ENCODE measurements at regions of chr15 and their contacts with region 1.

Region 1: GRCh38 chr15:74906446-74907162 is at the start of gene FAM219B:
- DNase-seq: peak; percentile 88
- ATAC-seq: peak; percentile 88
- H3K4me3 Mint-ChIP-seq: peak within 1 kb of the TSS; percentile 92
- H3K27ac Mint-ChIP-seq: peak within 1 kb of the TSS; percentile 94
- H3K4me1 Mint-ChIP-seq: peaks cover 37% of the 10 kb centered on the region
- H3K27me3 Mint-ChIP-seq: no peaks in the 10 kb centered on the region
- total RNA-seq, gene FAM219B: 39.3 to 49.7 TPM

Region 2: GRCh38 chr15:73972984-73973682 is 933.5 kb before region 1 on chr15:
- CTCF ChIA-PET with region 1: no interaction called
- POLR2A ChIA-PET with region 1: no interaction called
- intact Hi-C with region 1: no loop called
- DNase-seq: peak; percentile 91
- ATAC-seq: peak; percentile 88
- H3K4me3 Mint-ChIP-seq: peak overlapping the region; percentile 8
- H3K27ac Mint-ChIP-seq: no peak overlapping the region
- H3K4me1 Mint-ChIP-seq: peaks cover 27% of the 10 kb centered on the region
- H3K27me3 Mint-ChIP-seq: peaks cover 12% of the 10 kb centered on the region

Region 3: GRCh38 chr15:74651242-74651741 is 255.3 kb before region 1 on chr15:
- CTCF ChIA-PET with region 1: no interaction called
- POLR2A ChIA-PET with region 1: no interaction called
- intact Hi-C with region 1: no loop called
- DNase-seq: no peak
- ATAC-seq: no peak
- H3K4me3 Mint-ChIP-seq: no peak overlapping the region
- H3K27ac Mint-ChIP-seq: no peak overlapping the region
- H3K4me1 Mint-ChIP-seq: peaks cover 5% of the 10 kb centered on the region
- H3K27me3 Mint-ChIP-seq: no peaks in the 10 kb centered on the region

Region 4: DNA sequence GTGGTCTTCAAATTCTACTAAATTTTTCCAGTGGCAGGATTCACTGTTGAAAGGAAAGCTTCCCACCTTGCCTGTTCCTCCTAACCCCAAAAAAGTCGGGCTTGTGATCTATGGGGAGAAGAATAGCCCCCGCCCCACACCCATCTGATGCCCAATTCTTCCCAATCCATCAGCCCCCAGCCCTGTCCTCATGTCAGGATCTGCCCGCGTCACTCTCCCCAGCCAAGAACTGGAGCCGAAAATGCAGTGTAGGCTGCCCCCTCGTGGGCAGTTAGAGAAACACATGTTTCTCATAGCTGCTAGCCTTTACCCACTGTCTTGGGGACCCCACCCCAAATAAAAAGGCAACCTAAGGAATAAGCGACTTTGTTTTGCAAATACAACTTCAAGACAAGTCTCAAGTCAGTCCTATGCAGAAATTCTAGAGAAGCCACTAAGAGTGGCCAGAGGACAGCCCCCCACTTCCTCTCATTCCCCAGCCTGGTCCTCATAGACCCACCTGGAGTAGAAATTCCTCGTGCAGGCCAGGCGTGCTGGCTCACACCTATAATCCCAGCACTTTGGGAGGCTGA is 137.7 kb before region 1 on chr15:
- CTCF ChIA-PET with region 1: interaction called, 64 read pairs
- POLR2A ChIA-PET with region 1: no interaction called
- intact Hi-C with region 1: loop called (anchors 1 kb)
- DNase-seq: peak; percentile 83
- ATAC-seq: peak; percentile 45
- H3K4me3 Mint-ChIP-seq: no peak overlapping the region
- H3K27ac Mint-ChIP-seq: no peak overlapping the region
- H3K4me1 Mint-ChIP-seq: peaks cover 20% of the 10 kb centered on the region
- H3K27me3 Mint-ChIP-seq: peaks cover 2% of the 10 kb centered on the region

Region 5: GRCh38 chr15:74787251-74788041 is 119.2 kb before region 1 on chr15:
- CTCF ChIA-PET with region 1: interaction called, 11 read pairs
- POLR2A ChIA-PET with region 1: interaction called, 3 read pairs
- intact Hi-C with region 1: no loop called
- DNase-seq: peak; percentile 97
- ATAC-seq: peak; percentile 74
- H3K4me3 Mint-ChIP-seq: peak overlapping the region; percentile 89
- H3K27ac Mint-ChIP-seq: peak overlapping the region; percentile 100
- H3K4me1 Mint-ChIP-seq: peaks cover 58% of the 10 kb centered on the region
- H3K27me3 Mint-ChIP-seq: no peaks in the 10 kb centered on the region

Region 6: DNA sequence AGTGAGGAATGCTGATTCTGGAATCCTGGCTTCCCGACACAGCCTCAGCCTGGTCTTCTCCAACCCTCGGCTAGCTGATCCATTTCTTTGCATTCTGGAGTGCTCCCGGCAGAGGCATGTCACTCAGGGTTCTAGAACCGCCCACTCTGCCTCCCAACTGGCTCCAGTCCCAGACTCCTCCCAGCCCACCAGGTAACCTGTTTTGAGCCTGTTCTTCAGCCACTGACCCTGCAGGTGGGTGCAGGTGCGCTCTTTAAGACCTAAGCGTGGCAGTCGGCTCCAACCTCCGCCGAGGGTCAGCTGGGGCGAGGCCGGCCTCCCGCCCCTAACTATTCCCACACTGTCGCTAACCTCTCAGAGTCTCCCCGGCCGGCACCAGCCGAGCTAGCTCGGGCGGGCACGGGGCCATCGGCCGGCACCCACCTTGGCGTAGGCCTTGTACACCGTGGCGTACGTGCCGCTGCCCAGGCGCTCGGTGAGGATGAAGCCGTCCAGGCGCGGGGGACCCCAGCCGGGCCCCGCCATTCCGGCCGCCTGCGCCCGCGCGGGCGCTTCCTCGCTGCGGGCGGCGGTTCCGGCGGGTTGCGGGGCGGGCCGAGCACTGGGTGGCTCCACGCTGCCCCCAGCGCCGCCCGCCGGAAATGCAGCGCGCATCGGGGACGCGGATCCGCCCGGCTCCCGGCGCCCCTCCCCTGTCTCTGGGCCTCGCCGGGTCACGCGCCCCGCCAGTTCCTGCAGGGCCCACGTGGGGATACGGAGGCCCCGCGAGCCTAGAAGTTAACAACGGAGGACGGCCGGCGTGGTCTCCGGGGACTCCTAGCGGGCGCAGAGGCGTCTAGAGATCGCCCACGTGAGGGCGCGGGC is 63.8 kb before region 1 on chr15 and contains the start of gene ULK3:
- CTCF ChIA-PET with region 1: interaction called, 9 read pairs
- POLR2A ChIA-PET with region 1: no interaction called
- intact Hi-C with region 1: loop called in 1 of 2 experiments (anchors 1 kb)
- DNase-seq: peak; percentile 97
- ATAC-seq: peak; percentile 85
- H3K4me3 Mint-ChIP-seq: peak within 1 kb of the TSS; percentile 90
- H3K27ac Mint-ChIP-seq: peak within 1 kb of the TSS; percentile 90
- H3K4me1 Mint-ChIP-seq: peaks cover 45% of the 10 kb centered on the region
- H3K27me3 Mint-ChIP-seq: no peaks in the 10 kb centered on the region
- total RNA-seq, gene ULK3: 40.3 to 45.2 TPM

Region 7: DNA sequence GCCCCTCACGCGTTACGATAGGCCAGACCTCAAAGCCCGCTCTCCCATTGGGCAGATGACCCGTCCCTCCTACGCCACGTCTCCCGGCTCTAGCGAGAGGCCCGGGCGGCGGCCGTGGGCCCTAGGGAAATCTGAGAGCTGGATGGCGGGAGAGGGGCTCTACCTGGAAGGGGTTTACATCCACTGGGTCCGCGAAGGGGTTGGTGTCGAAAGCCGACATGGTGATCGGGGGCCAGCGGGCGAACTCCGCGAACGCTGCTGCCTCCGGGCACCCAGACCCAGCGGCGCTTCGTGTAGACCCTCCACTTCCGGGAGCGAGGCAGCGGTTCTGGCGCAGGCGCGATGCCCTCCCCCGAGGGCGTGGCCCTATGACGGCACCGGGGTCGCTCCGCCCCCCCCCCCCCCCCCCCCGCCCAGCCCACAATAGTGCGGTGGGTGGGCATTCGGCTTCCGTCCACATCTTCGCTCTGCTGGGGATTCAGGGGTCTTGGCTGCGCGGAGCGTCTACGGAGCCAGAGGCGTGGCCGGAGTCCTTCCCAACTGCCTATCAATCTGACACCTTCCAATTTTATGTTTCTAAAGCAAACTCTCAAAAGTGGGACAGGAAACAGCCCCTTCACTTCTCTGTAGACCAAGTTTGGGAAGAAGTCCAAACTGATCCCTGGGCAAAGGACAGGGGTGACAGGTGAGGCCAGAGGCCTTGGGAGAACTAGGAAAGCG is 33.4 kb before region 1 on chr15 and contains the start of gene SCAMP2:
- CTCF ChIA-PET with region 1: interaction called, 38 read pairs
- POLR2A ChIA-PET with region 1: interaction called, 7 read pairs
- intact Hi-C with region 1: loop called in 1 of 2 experiments (anchors 1 kb)
- DNase-seq: peak; percentile 94
- ATAC-seq: peak; percentile 84
- H3K4me3 Mint-ChIP-seq: peak within 1 kb of the TSS; percentile 87
- H3K27ac Mint-ChIP-seq: peak within 1 kb of the TSS; percentile 87
- H3K4me1 Mint-ChIP-seq: peaks cover 48% of the 10 kb centered on the region
- H3K27me3 Mint-ChIP-seq: no peaks in the 10 kb centered on the region
- total RNA-seq, gene SCAMP2: 61.6 to 83.4 TPM

Region 8: DNA sequence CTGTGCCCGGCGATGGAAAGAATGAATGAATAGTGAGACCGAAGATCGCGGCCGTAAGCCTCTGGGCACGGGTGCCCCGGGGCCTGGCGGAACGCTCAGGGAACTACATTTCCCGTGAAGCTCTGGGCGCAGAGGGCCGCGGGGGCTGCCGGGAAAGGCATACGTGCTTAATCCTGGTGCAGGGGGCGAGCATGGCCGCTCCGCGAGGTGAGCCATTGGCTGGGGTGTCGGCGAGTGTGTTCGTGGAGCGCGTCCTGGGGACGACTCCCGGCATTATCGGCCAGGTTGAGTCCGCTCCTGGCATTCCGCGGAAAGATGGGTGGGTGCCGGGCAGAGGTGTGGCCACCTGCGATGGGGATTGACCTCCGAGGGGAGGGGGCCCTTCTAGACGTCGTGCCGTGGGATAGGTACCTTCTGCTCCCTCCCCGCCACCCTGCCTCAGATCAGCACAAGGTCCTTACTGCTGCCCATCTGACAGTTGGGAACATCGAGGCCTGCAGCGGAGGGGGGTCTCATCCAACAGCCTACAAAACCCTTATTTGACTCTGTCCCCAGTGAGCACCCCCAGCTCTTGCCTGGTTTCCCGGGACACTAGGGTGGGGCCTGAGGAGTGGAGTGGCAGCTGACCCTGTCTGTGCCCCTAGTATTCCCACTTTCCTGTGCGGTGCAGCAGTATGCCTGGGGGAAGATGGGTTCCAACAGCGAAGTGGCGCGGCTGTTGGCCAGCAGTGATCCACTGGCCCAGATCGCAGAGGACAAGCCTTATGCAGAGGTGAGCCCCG is 16.5 kb before region 1 on chr15 and contains the start of gene MPI:
- CTCF ChIA-PET with region 1: interaction called, 22 read pairs
- POLR2A ChIA-PET with region 1: interaction called, 6 read pairs
- intact Hi-C with region 1: loop called in 1 of 2 experiments (anchors 1 kb)
- DNase-seq: peak; percentile 95
- ATAC-seq: peak; percentile 98
- H3K4me3 Mint-ChIP-seq: peak within 1 kb of the TSS; percentile 73
- H3K27ac Mint-ChIP-seq: peak within 1 kb of the TSS; percentile 86
- H3K4me1 Mint-ChIP-seq: peaks cover 46% of the 10 kb centered on the region
- H3K27me3 Mint-ChIP-seq: no peaks in the 10 kb centered on the region
- total RNA-seq, gene MPI: 75.7 to 93.3 TPM

Region 9: GRCh38 chr15:74956648-74957300 is 50.2 kb after region 1 on chr15 and contains the start of gene RPP25:
- CTCF ChIA-PET with region 1: interaction called, 11 read pairs
- POLR2A ChIA-PET with region 1: no interaction called
- intact Hi-C with region 1: no loop called
- DNase-seq: peak; percentile 85
- ATAC-seq: peak; percentile 84
- H3K4me3 Mint-ChIP-seq: peak within 1 kb of the TSS; percentile 65
- H3K27ac Mint-ChIP-seq: no peak within 1 kb of the TSS
- H3K4me1 Mint-ChIP-seq: peaks cover 46% of the 10 kb centered on the region
- H3K27me3 Mint-ChIP-seq: peaks cover 25% of the 10 kb centered on the region
- total RNA-seq, gene RPP25: 5.4 to 6.2 TPM

Region 10: GRCh38 chr15:74967670-74968069 is 61.1 kb after region 1 on chr15:
- CTCF ChIA-PET with region 1: no interaction called
- POLR2A ChIA-PET with region 1: no interaction called
- intact Hi-C with region 1: no loop called
- DNase-seq: no peak
- ATAC-seq: no peak
- H3K4me3 Mint-ChIP-seq: no peak overlapping the region
- H3K27ac Mint-ChIP-seq: no peak overlapping the region
- H3K4me1 Mint-ChIP-seq: peaks cover 2% of the 10 kb centered on the region
- H3K27me3 Mint-ChIP-seq: peaks cover under 1% of the 10 kb centered on the region

Region 11: GRCh38 chr15:75029378-75030022 is 122.9 kb after region 1 on chr15:
- CTCF ChIA-PET with region 1: no interaction called
- POLR2A ChIA-PET with region 1: no interaction called
- intact Hi-C with region 1: no loop called
- DNase-seq: peak; percentile 94
- ATAC-seq: peak; percentile 92
- H3K4me3 Mint-ChIP-seq: no peak overlapping the region
- H3K27ac Mint-ChIP-seq: no peak overlapping the region
- H3K4me1 Mint-ChIP-seq: peaks cover 15% of the 10 kb centered on the region
- H3K27me3 Mint-ChIP-seq: no peaks in the 10 kb centered on the region

Measured in activated CD4-positive, alpha-beta T cell treated with anti-CD3 and anti-CD28 coated beads for 36 hours (primary cell).